HEK293T (cell line): ENCODE measurements at regions of chr4 and their contacts with region 1.

Region 1: DNA sequence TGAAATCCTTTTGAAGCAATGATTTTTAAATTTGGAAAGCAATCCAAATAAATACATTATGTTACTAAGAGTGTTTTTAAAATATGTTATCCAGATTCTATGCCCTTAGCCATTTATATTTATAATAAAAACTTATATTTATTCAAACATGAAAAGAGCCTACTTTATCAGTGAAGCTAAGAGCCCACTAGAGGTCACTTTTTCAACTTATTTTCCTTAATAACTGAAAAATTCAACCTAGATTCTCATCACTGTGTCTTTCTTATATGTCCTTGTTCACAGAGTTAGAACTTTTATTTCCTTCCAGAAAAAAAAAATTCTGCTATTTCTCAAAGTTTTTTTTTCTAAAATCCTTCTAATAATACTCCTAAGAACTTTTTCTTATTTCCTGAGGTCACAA is 23.9 kb downstream of the PRDM8 start:
- DNase-seq: no peak

Region 2: DNA sequence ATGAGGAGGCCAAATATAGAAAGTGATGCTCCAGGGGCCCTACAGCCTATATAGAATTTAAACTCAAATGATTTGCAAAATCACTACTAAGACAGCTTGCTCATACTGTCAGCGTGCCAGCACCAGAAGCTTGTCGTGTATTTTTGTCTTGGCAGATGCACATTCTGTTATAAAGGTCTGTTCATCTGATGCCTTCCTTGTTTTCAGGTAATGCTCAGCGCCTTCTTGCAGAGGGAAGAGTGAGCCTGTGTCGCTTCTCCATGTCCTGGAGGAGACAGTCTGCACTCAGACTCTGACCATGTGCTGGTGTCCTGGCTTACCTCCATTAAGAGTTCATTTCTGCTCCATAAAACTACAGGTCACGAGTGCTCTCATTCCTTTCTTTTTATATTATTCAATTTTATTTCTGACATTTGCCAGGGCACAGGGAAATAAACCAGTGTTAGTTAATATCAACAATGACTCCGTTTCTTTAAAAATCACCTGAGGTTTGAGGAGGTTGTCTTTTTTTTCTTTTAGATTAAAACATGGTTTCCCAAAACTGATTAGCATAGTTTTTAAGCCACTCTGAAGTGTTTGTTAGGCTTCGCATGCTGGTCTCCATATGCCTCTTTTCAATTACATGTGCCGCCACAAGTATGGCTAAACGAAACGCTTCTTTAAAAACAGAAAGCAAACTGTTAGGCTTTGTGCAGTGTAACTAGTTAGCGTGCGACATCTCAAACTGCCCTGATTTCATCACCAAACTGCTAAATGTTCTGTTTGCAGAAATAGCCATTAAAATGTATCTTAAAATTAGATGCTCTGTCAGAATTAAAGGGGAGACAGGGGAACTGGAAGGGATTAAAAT is 597.9 kb before region 1 on chr4:
- CTCF ChIA-PET with region 1: no interaction called
- POLR2A ChIA-PET with region 1: no interaction called
- DNase-seq: no peak

Region 3: DNA sequence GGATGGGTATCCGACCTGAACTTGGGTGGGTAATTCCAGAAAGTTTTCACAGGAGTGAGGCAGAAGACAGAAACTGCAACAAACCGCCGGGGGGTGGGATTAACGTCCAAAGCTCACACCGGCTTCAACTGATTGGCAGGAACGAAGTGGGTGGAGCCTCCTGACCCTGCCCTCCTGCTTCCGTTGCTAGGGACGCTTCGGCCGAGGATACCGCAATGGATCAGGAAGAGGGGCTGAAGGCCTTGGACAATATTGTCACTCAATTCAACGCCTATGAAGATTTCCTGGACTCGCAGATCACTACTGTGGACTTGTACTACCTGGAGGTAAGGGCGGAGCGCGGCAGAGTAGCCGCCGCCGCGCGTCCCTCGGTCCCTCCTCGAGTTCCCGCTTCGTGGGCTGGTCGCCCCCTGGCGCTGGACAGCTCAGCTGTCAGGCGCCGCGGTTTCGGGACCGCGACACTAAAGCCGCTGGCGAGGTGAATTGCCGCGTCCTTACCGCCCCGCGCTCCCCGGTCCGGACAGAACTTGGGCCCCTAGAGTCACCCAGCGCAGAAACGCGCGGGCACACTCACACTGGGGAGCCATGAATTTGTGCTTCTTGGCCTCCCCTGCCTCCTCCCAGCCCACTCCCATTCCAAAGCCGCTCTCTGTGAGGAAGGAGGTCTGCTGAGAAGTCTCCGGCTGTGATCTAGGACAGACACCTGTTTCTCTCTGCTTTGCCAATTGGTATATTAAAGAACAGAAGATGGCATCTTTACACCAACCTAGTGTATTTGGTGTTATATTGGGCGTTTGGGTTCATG is 114.6 kb after region 1 on chr4 and contains the start of gene CFAP299:
- CTCF ChIA-PET with region 1: interaction called, 12 read pairs
- POLR2A ChIA-PET with region 1: no interaction called
- DNase-seq: peak; percentile 90